ENCODE measurements at regions of chr3 and their contacts with region 1.

Region 1: GRCh38 chr3:141441381-141442364 is 45.2 kb upstream of the RASA2 start:
- DNase-seq: peak; percentile 90
- H3K27ac ChIP-seq: peak overlapping the region; percentile 71
- CTCF ChIP-seq: peak; percentile 85

Region 2: DNA sequence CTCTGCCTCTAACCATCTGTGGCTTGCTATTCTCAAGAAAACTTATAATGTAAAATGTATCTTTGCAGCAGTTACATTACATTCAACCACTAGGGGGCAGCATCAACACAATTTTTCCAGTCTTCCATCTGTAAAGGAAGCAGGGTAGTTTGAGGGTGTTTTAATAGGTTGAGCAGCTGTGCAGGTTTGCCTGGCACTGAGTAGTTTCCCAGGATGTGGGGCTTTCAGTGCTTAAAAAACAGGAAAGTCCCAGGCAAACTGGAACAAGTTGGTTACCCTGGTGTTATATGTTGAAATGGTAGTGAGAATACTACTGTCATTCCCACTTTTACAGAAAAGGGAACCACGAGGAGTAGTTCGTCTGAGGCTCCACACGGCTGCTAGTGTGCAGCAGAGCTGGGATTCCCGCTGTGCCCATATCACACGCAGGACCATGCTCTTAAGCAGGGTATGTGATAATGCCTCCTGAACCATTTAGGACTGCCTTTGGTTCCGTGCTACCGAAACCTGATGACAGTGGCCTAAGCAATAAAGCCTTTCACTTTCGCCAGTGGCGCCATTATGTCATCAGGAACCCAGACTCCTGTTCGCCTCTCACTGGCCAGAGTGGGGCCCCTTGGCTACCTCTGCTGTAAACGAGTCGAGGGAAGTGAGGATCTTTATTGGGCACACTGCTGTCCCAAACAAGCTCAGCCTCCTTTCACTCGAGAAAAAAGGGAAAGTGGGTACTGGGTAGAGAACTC is 138.0 kb before region 1 on chr3:
- CTCF ChIA-PET with region 1: interaction called, 13 read pairs
- POLR2A ChIA-PET with region 1: no interaction called
- DNase-seq: peak; percentile 58
- H3K27ac ChIP-seq: no peak overlapping the region
- CTCF ChIP-seq: peak; percentile 74

Region 3: GRCh38 chr3:141360888-141361598 is 80.6 kb before region 1 on chr3:
- CTCF ChIA-PET with region 1: interaction called, 11 read pairs
- POLR2A ChIA-PET with region 1: no interaction called
- DNase-seq: peak; percentile 57
- H3K27ac ChIP-seq: no peak overlapping the region
- CTCF ChIP-seq: peak; percentile 80

Region 4: GRCh38 chr3:141605883-141606282 is 164.2 kb after region 1 on chr3:
- CTCF ChIA-PET with region 1: no interaction called
- POLR2A ChIA-PET with region 1: no interaction called
- DNase-seq: no peak
- H3K27ac ChIP-seq: no peak overlapping the region
- CTCF ChIP-seq: no peak